ENCODE measurements at regions of chr9 and their contacts with region 1.

Region 1: GRCh38 chr9:37371565-37372464 is 50.7 kb upstream of the GRHPR start:
- DNase-seq: peak; percentile 70
- H3K4me3 ChIP-seq: peak overlapping the region; percentile 37
- H3K27ac ChIP-seq: peak overlapping the region; percentile 99
- H3K4me1 ChIP-seq: peaks cover 86% of the 10 kb centered on the region
- CTCF ChIP-seq: no peak

Region 2: GRCh38 chr9:37036776-37037502 is 334.9 kb before region 1 on chr9:
- CTCF ChIA-PET with region 1: interaction called, 4 read pairs
- POLR2A ChIA-PET with region 1: interaction called, 5 read pairs
- intact Hi-C with region 1: loop called (anchors 5 kb)
- DNase-seq: peak; percentile 78
- H3K4me3 ChIP-seq: peak overlapping the region; percentile 88
- H3K27ac ChIP-seq: peak overlapping the region; percentile 95
- H3K4me1 ChIP-seq: peaks cover 63% of the 10 kb centered on the region
- CTCF ChIP-seq: peak; percentile 20; the same call in 1 of the 2 replicates

Region 3: DNA sequence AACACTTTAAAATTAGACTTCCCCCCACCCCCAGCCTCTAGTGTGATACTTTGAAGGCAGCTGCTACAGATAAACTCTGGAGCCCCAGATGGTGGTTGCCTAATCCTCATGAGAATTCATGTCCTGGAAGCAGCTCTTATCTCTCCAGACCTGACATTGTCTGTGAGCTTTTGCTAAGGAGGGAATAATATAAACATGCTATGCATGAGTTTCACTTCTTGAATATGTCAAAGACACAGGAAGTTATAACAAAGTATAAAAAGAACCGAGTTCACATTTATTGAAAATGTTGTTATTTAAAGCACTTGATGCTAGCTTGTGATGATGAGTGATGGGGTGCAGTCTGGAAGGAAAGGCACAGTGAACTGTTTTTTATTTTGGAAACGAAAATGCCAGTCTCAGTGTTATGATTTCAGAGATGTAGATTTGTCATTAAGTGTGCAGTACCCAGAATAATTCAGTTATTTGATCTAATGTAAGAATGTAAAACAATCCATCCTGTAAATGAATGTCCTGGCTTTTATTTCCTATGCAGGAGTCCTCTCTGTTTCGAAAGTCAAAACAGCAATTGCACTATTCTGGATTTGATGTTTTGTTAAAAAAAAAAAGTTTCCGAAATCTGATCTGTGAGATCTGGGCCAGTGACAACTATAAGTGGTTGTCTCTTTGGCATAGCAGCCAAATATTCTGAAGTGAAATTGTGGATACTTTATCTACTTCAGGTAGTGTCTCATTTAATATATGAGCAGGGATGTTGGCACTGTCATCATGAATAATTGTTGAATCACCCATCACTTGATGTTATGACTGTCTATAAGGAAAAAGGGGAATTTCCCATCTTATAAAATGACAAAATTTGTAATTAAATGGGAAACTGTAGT is 174.4 kb before region 1 on chr9:
- CTCF ChIA-PET with region 1: interaction called, 3 read pairs
- POLR2A ChIA-PET with region 1: interaction called, 11 read pairs
- intact Hi-C with region 1: loop called (anchors 1 kb)
- DNase-seq: peak; percentile 99
- H3K4me3 ChIP-seq: peak overlapping the region; percentile 60
- H3K27ac ChIP-seq: peak overlapping the region; percentile 99
- H3K4me1 ChIP-seq: peaks cover 97% of the 10 kb centered on the region
- CTCF ChIP-seq: no peak

Region 4: DNA sequence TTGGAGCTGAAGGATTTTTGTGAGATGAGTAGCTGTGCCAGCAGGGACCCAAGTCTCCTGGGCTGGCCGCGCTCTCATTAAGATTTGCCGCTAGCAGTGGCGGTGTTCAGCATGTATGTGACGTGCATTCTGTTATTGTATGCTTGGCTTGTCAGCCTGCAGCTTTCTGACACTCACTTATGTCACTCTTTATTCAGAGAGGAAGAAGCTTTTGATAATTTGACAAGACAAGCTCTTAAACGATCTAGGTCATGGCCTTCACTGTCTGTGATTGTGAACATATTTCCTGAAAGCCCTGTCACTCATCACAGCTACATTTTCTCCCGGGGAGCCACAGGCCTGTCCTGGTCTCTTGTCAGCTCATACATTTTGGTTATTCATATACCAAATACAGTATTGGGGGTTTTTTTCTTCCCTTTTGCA is 47.5 kb before region 1 on chr9:
- CTCF ChIA-PET with region 1: no interaction called
- POLR2A ChIA-PET with region 1: interaction called, 17 read pairs
- intact Hi-C with region 1: loop called (anchors 2 kb)
- DNase-seq: peak; percentile 80
- H3K4me3 ChIP-seq: peak overlapping the region; percentile 35
- H3K27ac ChIP-seq: peak overlapping the region; percentile 98
- H3K4me1 ChIP-seq: peaks cover 81% of the 10 kb centered on the region
- CTCF ChIP-seq: no peak

Region 5: GRCh38 chr9:37390759-37391158 is 18.9 kb after region 1 on chr9:
- CTCF ChIA-PET with region 1: interaction called, 4 read pairs
- POLR2A ChIA-PET with region 1: interaction called, 170 read pairs
- intact Hi-C with region 1: loop called (anchors 1 kb)
- DNase-seq: peak; percentile 92
- H3K4me3 ChIP-seq: no peak overlapping the region
- H3K27ac ChIP-seq: peak overlapping the region; percentile 46
- H3K4me1 ChIP-seq: peaks cover 82% of the 10 kb centered on the region
- CTCF ChIP-seq: peak; percentile 96

Region 6: GRCh38 chr9:37415011-37415719 is 43.4 kb after region 1 on chr9:
- CTCF ChIA-PET with region 1: interaction called, 21 read pairs
- POLR2A ChIA-PET with region 1: interaction called, 298 read pairs
- intact Hi-C with region 1: no loop called
- DNase-seq: peak; percentile 92
- H3K4me3 ChIP-seq: peak overlapping the region; percentile 55
- H3K27ac ChIP-seq: peak overlapping the region; percentile 97
- H3K4me1 ChIP-seq: peaks cover 94% of the 10 kb centered on the region
- CTCF ChIP-seq: peak; percentile 92

Region 7: GRCh38 chr9:37503736-37504135 is 131.9 kb after region 1 on chr9:
- CTCF ChIA-PET with region 1: no interaction called
- POLR2A ChIA-PET with region 1: no interaction called
- intact Hi-C with region 1: no loop called
- DNase-seq: no peak
- H3K4me3 ChIP-seq: no peak overlapping the region
- H3K27ac ChIP-seq: no peak overlapping the region
- H3K4me1 ChIP-seq: no peaks in the 10 kb centered on the region
- CTCF ChIP-seq: no peak